ENCODE measurements at regions of chr2 and their contacts with region 1.

Region 1: GRCh38 chr2:118046634-118047210 is 32.9 kb upstream of the CCDC93 start:
- DNase-seq: peak; percentile 21
- H3K4me3 ChIP-seq: no peak overlapping the region
- H3K27ac ChIP-seq: no peak overlapping the region
- H3K4me1 ChIP-seq: no peaks in the 10 kb centered on the region
- H3K27me3 ChIP-seq: no peaks in the 10 kb centered on the region
- CTCF ChIP-seq: peak; percentile 63 to 67

Region 2: GRCh38 chr2:118061135-118061955 is 14.6 kb after region 1 on chr2:
- CTCF ChIA-PET with region 1: interaction called, 7 read pairs
- dilution Hi-C with region 1: no loop called
- in situ Hi-C with region 1: no loop called
- intact Hi-C with region 1: loop called (anchors 1 kb)
- DNase-seq: peak; percentile 72
- H3K4me3 ChIP-seq: no peak overlapping the region
- H3K27ac ChIP-seq: no peak overlapping the region
- H3K4me1 ChIP-seq: peaks cover 12% of the 10 kb centered on the region
- H3K27me3 ChIP-seq: no peaks in the 10 kb centered on the region
- CTCF ChIP-seq: peak; percentile 44 to 73

Region 3: DNA sequence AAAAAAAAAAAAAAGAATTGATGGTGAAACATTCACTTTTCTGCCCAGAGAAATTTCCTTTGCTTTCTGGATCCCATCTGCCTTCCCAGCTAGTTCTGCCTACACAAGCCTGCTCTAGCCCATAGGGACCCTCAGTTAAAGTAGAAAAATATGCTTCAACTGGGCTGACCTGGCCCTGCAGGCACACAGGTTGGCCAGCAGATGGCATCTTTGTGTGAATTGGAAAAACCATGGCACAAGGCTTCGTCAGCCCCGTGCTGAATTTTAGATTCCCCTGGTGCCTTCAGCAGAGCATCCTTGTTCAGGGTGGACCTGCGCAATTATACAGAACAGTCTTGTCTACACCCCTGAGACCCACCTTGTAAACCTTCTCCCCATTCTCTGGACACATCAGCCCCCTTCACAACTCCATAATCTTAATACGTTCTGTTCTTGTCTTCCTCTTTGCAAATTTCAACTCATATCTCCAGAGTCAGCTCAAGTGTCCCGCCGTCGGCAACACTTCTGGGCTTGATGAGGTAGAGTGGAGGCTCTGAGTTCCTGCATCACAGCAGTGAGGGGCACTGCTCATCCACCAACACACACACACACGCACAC is 156.1 kb after region 1 on chr2:
- CTCF ChIA-PET with region 1: interaction called, 7 read pairs
- dilution Hi-C with region 1: no loop called
- in situ Hi-C with region 1: no loop called
- intact Hi-C with region 1: loop called (anchors 2 kb)
- DNase-seq: peak; percentile 22
- H3K4me3 ChIP-seq: no peak overlapping the region
- H3K27ac ChIP-seq: no peak overlapping the region
- H3K4me1 ChIP-seq: no peaks in the 10 kb centered on the region
- H3K27me3 ChIP-seq: peaks cover 4% of the 10 kb centered on the region
- CTCF ChIP-seq: peak; percentile 90 to 92

Region 4: DNA sequence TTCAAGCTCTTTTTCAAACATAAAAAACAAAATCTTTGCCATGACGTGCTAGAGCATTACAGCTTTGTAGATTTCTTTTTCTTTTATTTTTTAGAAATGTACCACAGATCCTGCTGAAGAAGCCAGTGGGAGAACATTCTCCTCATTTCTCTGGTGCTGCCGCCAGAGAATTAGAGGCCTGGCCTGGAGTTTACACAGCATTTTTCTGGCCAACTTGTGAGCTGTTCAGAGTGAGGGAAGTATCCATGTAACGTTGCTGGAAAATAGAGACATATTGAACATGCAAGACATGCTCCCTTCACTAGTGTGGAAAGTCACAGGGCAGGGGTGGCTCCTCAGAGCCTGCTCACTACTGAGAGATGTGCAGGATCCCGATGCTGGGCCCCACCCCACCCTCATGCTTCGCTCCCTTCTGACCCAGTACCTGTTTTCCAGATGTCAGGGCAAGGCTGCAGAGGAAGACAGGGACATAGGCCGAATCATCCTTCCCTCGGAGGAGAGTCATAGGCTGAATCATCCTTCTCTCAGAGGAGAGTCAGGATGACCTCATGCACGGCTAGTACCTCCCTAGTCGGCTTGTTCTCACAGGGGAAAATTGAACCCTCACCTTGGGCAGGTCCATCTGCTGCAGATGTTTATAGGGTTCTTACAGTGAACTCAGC is 340.1 kb after region 1 on chr2:
- CTCF ChIA-PET with region 1: no interaction called
- dilution Hi-C with region 1: no loop called
- in situ Hi-C with region 1: no loop called
- intact Hi-C with region 1: loop called (anchors 10 kb)
- DNase-seq: peak; percentile 93
- H3K4me3 ChIP-seq: no peak overlapping the region
- H3K27ac ChIP-seq: peak overlapping the region; percentile 85
- H3K4me1 ChIP-seq: peaks cover 32% of the 10 kb centered on the region
- H3K27me3 ChIP-seq: no peaks in the 10 kb centered on the region
- CTCF ChIP-seq: no peak

Measured in mammary epithelial cell (primary cell).